Dorsolateral prefrontal cortex (tissue), 120 donors: ENCODE measurements at regions of chr2 and their contacts with region 1.

Region 1: DNA sequence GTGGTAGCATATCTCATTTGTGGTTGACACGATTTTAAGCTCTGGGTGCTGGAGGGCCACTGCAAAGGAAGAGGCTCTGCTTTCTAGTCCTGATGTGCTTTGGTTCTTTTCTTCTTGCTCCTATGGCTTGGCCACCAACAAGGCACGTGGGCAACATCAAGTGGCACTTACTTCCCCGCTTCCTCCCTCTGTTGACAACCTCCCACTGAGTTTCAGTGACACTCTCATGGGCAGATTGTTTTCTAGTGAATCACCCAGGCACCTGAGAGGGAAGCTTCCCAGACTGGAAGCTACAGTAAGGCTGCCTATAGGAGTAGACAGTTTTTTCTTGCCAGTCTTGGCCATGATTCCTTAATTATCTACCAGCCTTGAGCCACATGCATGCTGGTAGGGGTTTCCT is 89.0 kb downstream of the NBAS start:
- DNase-seq: no peak
- H3K4me3 ChIP-seq: no peak overlapping the region
- H3K27ac ChIP-seq: no peak overlapping the region
- H3K27me3 ChIP-seq: no peaks in the 10 kb centered on the region
- CTCF ChIP-seq: no peak

Region 2: GRCh38 chr2:15517793-15518192 is 45.7 kb after region 1 on chr2:
- intact Hi-C with region 1: loop called in 1 of 2 experiments (anchors 1 kb)
- DNase-seq: no peak
- H3K4me3 ChIP-seq: no peak overlapping the region
- H3K27ac ChIP-seq: peak overlapping the region in 2 of 59 donors; percentile 40 to 47
- H3K27me3 ChIP-seq: no peaks in the 10 kb centered on the region
- CTCF ChIP-seq: no peak